Naive thymus-derived CD4-positive, alpha-beta T cell (primary cell): ENCODE measurements at regions of chr22 and their contacts with region 1.

Region 1: GRCh38 chr22:39090426-39091064 is 6.5 kb upstream of the APOBEC3H start:
- DNase-seq: peak; percentile 40 to 85 (median 76)
- ATAC-seq: peak; percentile 83
- H3K4me3 ChIP-seq: peak overlapping the region; percentile 29
- H3K4me3 Mint-ChIP-seq: peak overlapping the region; percentile 63 to 84 (median 72)
- H3K27ac ChIP-seq: peak overlapping the region; percentile 69
- H3K27ac Mint-ChIP-seq: peak overlapping the region; percentile 85 to 97 (median 96)
- H3K4me1 ChIP-seq: peaks cover 48 to 86% of the 10 kb centered on the region in 2 donors
- H3K4me1 Mint-ChIP-seq: peaks cover 30 to 87% (median 69%) of the 10 kb centered on the region in 7 donors
- H3K27me3 ChIP-seq: no peaks in the 10 kb centered on the region
- H3K27me3 Mint-ChIP-seq: no peaks in the 10 kb centered on the region

Region 2: DNA sequence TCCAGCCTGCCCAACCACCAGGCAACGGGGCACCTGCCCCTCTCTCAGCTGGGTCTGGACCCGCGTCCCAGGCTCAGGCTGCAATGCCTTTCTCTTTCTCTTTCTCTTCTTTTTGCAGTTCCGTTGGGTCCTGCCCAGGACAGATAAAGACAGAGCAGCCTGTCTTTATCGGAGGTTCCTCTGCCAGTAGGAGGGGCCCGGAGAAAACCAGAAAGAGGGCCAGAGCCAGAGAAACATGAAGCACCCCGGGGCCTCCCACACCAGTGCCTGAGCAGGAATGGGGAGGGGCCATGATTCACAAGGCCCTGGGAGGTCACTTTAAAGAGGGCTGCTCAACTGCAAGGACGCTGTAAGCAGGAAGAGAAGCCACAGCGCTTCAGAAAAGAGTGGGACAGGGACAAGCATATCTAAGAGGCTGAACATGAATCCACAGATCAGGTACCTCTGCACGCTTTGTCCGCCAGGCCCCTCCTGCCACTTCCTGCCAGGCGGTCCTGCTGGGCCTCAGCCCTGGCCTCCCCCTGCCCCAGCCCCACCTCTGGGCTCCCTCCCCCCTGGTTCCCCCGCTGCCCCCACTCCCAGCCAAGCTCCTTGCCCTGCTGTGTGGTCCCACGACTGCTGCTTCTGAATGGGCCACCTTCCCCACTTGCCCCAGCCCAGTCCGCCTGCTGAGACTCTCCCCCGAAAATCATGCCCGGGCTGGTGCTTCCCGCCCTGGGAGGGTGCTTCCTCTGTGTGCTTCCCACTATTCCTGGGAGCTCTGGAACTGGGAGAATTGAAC is 76.4 kb before region 1 on chr22 and contains the start of gene APOBEC3C:
- CTCF ChIA-PET with region 1: interaction called, 3 read pairs
- POLR2A ChIA-PET with region 1: interaction called, 5 read pairs
- intact Hi-C with region 1: loop called in 1 of 2 experiments (anchors 2 kb)
- DNase-seq: peak; percentile 28 to 78 (median 59)
- ATAC-seq: peak; percentile 95
- H3K4me3 ChIP-seq: peak within 1 kb of the TSS; percentile 81
- H3K4me3 Mint-ChIP-seq: peak within 1 kb of the TSS; percentile 88 to 99 (median 94)
- H3K27ac ChIP-seq: peak within 1 kb of the TSS; percentile 87
- H3K27ac Mint-ChIP-seq: peak within 1 kb of the TSS; percentile 82 to 98 (median 95)
- H3K4me1 ChIP-seq: peaks cover 9 to 10% of the 10 kb centered on the region in 2 donors
- H3K4me1 Mint-ChIP-seq: peaks cover 12 to 51% (median 37%) of the 10 kb centered on the region in 7 donors
- H3K27me3 ChIP-seq: no peaks in the 10 kb centered on the region
- H3K27me3 Mint-ChIP-seq: no peaks in the 10 kb centered on the region
- total RNA-seq, gene APOBEC3C: 16.4 to 102 (median 20.5) TPM

Region 3: DNA sequence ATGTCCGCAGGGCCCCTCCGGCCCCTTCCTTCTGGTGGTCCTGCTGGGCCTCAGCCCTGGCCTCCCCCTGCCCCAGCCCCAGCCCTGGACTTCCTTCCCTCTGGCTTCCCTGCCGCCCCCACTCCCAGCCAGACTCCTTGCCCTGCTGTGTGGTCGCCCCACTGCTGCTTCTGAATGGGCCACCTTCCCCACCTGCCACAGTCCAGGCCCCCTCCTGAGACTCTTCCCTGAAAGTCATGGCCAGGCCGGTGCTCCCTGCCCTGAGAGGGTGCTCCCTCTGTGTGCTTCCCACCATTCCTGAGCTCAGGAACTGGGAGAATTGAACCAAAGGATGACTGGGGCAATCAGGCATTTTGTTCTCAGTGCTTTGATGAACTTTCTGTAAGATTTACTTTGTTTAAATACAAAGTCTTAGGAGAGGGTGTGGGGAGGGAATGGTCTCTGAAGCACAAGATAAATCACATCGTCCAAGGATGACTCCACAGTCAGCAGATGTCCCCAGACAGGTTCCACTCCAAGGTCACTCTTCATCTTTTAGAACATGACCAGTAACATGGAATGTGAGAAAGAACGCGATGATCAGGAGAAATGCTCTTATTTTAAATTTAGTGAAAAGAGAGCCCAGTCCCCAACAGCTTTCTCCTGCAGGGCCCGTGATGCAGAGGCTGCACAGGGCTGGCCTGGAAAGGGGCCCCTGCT is 68.8 kb before region 1 on chr22:
- CTCF ChIA-PET with region 1: interaction called, 3 read pairs
- POLR2A ChIA-PET with region 1: interaction called, 3 read pairs
- intact Hi-C with region 1: loop called in 1 of 2 experiments (anchors 5 kb)
- DNase-seq: peak in 1 of 9 donors; percentile 18
- ATAC-seq: no peak
- H3K4me3 ChIP-seq: peak overlapping the region; percentile 76
- H3K4me3 Mint-ChIP-seq: peak overlapping the region; percentile 91 to 98 (median 94)
- H3K27ac ChIP-seq: peak overlapping the region; percentile 86
- H3K27ac Mint-ChIP-seq: peak overlapping the region; percentile 88 to 98 (median 96)
- H3K4me1 ChIP-seq: peaks cover 18 to 24% of the 10 kb centered on the region in 2 donors
- H3K4me1 Mint-ChIP-seq: peaks cover 29 to 73% (median 54%) of the 10 kb centered on the region in 7 donors
- H3K27me3 ChIP-seq: no peaks in the 10 kb centered on the region
- H3K27me3 Mint-ChIP-seq: no peaks in the 10 kb centered on the region

Region 4: DNA sequence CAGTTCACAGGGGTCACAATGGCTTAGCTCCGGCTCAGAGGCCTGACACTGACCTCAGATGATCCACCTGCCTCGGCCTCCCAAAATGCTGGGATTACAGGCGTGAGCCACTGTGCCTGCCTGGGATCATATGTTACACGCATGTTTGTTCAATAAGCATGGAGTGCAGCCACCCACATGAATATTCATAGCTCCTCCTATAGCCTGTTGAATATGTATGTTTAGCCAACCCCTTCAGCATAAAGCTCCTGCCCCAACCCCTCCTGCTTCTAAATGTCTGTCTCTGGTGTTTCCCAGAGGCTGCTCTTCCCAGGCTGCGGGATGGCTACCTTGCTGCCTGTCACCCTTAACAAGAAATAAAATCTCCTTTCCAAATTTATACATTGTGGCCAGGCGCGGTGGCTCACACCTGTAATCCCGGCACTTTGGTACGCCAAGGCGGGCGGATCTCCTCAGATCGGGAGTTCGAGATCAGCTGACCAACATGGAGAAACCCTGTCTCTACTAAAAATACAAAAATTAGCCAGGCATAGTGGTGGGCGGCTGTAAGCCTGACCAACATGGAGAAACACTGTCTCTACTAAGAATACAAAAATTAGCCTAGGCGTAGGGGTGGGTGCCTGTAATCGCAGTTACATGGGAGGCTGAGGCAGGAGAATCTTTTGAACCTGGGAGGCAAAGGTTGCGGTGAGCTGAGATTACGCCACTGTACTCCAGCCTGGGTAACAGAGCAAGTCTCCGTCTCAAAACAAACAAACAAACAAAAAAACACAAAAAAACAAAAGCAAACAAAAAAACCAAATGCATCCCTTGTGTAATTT is 51.0 kb before region 1 on chr22:
- CTCF ChIA-PET with region 1: no interaction called
- POLR2A ChIA-PET with region 1: interaction called, 5 read pairs
- intact Hi-C with region 1: loop called (anchors 2 to 5 kb)
- DNase-seq: no peak
- ATAC-seq: no peak
- H3K4me3 ChIP-seq: no peak overlapping the region
- H3K4me3 Mint-ChIP-seq: peak overlapping the region; percentile 63 to 88 (median 79)
- H3K27ac ChIP-seq: peak overlapping the region; percentile 77
- H3K27ac Mint-ChIP-seq: peak overlapping the region; percentile 62 to 93 (median 82)
- H3K4me1 ChIP-seq: peaks cover 8 to 18% of the 10 kb centered on the region in 2 donors
- H3K4me1 Mint-ChIP-seq: peaks cover 24 to 48% (median 39%) of the 10 kb centered on the region in 7 donors
- H3K27me3 ChIP-seq: no peaks in the 10 kb centered on the region
- H3K27me3 Mint-ChIP-seq: no peaks in the 10 kb centered on the region

Region 5: GRCh38 chr22:39080052-39080762 is 10.3 kb before region 1 on chr22:
- CTCF ChIA-PET with region 1: no interaction called
- POLR2A ChIA-PET with region 1: interaction called, 4 read pairs
- intact Hi-C with region 1: loop called in 1 of 2 experiments (anchors 2 kb)
- DNase-seq: no peak
- ATAC-seq: peak; percentile 20
- H3K4me3 ChIP-seq: peak overlapping the region; percentile 6
- H3K4me3 Mint-ChIP-seq: peak overlapping the region in 3 of 10 donors; percentile 19 to 47 (median 40)
- H3K27ac ChIP-seq: no peak overlapping the region
- H3K27ac Mint-ChIP-seq: peak overlapping the region in 3 of 9 donors; percentile 25 to 43 (median 36)
- H3K4me1 ChIP-seq: peaks cover 4 to 47% of the 10 kb centered on the region in 2 donors
- H3K4me1 Mint-ChIP-seq: peaks cover 23 to 58% (median 36%) of the 10 kb centered on the region in 7 donors
- H3K27me3 ChIP-seq: no peaks in the 10 kb centered on the region
- H3K27me3 Mint-ChIP-seq: no peaks in the 10 kb centered on the region

Region 6: DNA sequence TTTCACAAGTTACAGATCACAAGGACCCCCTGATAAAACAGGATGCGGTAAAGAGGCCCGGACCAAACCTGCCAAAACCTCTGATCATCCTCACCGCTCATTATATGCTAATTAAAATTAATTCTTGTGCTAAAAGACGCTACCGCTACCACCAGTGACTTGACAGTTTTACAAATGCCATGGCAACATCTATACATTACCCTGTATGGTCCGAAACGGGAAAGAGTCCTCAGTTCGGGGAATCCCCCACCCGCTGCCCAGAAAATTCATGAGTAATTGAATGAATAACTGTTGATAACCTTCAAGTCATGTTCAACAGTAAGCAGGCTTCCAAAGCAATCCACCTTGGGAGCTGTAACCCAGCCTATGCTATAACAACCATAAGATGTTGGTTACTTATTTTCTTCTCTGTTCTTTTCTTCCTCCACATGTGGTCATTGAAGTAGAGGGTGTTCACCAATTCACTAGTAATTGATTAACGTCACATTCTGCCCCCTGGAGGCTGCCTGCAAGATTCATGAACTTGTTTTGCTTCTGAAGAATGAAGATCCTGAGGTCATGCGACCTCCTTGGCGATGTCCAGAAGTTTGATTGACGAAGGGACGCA is 27.1 kb after region 1 on chr22:
- CTCF ChIA-PET with region 1: interaction called, 4 read pairs
- POLR2A ChIA-PET with region 1: interaction called, 3 read pairs
- intact Hi-C with region 1: loop called in 1 of 2 experiments (anchors 1 kb)
- DNase-seq: peak in 8 of 9 donors; percentile 46 to 69 (median 62)
- ATAC-seq: peak; percentile 77
- H3K4me3 ChIP-seq: no peak overlapping the region
- H3K4me3 Mint-ChIP-seq: peak overlapping the region in 2 of 10 donors; percentile 40 to 47
- H3K27ac ChIP-seq: no peak overlapping the region
- H3K27ac Mint-ChIP-seq: peak overlapping the region in 5 of 9 donors; percentile 3 to 73 (median 59)
- H3K4me1 ChIP-seq: peaks cover 6 to 28% of the 10 kb centered on the region in 2 donors
- H3K4me1 Mint-ChIP-seq: peaks cover 7 to 42% (median 18%) of the 10 kb centered on the region in 7 donors
- H3K27me3 ChIP-seq: no peaks in the 10 kb centered on the region
- H3K27me3 Mint-ChIP-seq: no peaks in the 10 kb centered on the region